ENCODE measurements at regions of chr4 and their contacts with region 1.

Region 1: DNA sequence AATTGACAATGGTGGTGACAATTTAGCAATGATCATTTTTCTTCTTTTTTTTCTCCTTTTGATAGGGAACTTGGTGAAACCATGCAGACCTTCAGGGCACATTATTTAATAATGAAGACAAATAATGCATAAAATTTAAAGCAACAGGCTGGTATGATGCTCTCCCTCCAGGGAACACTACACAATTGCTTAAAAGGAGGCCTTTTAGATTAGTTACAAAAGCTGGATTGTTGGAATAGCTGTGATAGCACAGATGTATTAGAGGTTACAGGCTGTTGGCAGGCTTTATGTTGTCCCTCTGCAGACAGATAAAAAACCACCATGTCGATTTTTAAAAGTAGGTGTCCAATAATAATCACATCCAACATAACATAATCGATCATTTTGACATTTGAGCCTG is 307.0 kb downstream of the ADGRL3 start:
- DNase-seq: no peak
- H3K4me3 ChIP-seq: no peak overlapping the region
- H3K27ac ChIP-seq: no peak overlapping the region
- H3K4me1 ChIP-seq: peaks cover 0 to 24% (median 5%) of the 10 kb centered on the region in 4 donors
- H3K27me3 ChIP-seq: no peaks in the 10 kb centered on the region
- CTCF ChIP-seq: no peak

Region 2: DNA sequence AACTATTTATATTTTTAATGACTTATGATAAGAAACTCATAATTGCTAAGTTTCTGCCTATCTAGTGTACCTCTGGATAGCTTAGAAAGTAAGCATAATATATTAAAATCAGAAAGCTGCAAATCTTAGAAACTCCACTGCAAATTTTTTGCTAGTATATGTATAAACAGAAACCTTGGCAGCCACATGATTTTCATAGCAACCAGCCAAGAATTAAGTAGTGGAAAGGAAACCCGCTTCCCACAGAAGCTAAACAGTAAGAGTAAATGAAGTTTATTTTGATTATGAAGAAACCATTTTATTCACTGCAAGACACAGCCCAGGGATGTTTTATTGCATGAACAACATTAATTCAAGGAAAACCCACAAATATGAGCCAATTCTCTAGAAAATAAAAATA is 1179.4 kb before region 1 on chr4:
- intact Hi-C with region 1: loop called (anchors 5 kb)
- DNase-seq: no peak
- H3K4me3 ChIP-seq: no peak overlapping the region
- H3K27ac ChIP-seq: peak overlapping the region; percentile 36 to 67
- H3K4me1 ChIP-seq: peaks cover 0 to 19% (median 9%) of the 10 kb centered on the region in 4 donors
- H3K27me3 ChIP-seq: no peaks in the 10 kb centered on the region
- CTCF ChIP-seq: no peak

Region 3: DNA sequence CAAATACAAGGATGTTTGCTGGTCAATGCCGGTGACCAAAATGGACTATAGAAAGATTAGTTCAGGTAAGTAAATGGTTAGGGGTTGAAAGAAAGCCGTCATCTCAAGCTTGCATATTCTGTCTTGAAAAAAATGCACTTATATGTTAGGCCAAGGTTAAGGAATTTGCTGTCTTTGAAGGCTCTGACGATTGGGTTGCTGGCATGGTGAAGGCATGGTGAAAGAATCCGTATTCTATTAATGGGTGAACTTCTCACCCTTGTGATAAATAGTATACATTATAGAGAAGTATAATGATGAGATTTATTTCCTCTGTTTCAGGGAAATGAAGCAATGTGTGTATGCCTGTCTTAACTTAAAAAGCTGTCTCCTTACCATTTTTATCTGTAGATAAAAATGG is 174.4 kb before region 1 on chr4:
- intact Hi-C with region 1: no loop called
- DNase-seq: no peak
- H3K4me3 ChIP-seq: no peak overlapping the region
- H3K27ac ChIP-seq: no peak overlapping the region
- H3K4me1 ChIP-seq: peaks cover 0 to 25% (median 3%) of the 10 kb centered on the region in 4 donors
- H3K27me3 ChIP-seq: no peaks in the 10 kb centered on the region
- CTCF ChIP-seq: no peak

Measured in tibial artery (tissue), 4 donors.